HepG2 (cell line): ENCODE measurements at regions of chrX and their contacts with region 1.

Region 1: GRCh38 chrX:30652527-30653414 is 452 bp upstream of the GK start:
- DNase-seq: peak; percentile 85
- ATAC-seq: peak; percentile 89
- H3K4me3 ChIP-seq: peak overlapping the region; percentile 46 to 72 (median 52)
- H3K27ac ChIP-seq: peak overlapping the region; percentile 96
- H3K4me1 ChIP-seq: peaks cover 66% of the 10 kb centered on the region
- H3K27me3 ChIP-seq: no peaks in the 10 kb centered on the region; a peak in 1 of 5 replicates
- CTCF ChIP-seq: no peak
- EP300 ChIP-seq: no peak
- POLR2A ChIP-seq: peak in 1 of 2 experiments; percentile 84; a peak in 3 of 4 replicates
- RAD21 ChIP-seq: peak; percentile 51

Region 2: DNA sequence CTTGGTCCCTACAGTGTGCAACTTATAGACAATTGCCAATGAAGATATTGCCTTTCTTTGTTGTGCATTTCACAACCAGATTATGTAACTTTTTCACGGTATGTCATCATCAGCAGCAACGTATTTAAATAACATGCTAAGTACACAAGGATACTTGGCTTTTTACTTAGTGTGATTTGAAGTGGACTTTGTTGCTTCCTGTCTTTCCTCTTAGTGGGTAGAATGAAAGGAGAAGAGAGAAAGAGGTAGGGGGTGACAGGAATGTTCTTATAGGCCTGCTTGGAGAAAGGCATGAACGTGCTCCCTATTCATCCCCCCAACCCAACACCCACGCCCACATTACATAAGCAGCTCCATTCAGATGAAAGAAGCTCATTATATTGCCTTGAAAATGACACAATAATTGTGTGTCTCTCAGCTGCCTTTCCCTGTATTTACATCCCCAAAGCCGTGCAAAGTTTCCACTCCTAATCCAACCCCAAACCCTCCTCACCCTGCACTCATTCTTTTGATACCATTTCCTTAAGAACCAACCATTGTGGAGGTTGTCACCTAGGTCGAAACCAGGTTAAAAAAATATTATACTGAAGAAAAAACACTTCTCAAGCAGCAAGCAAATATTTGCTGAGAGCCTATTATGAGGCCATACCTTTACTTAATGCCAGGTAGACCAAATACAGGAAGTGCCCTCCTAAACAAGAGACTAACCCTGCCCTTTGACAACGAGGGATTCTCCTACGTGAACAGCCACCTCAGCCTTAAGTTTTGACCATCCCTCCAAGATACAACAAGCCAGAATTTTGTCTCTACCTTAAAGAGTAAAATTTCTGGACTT is 24.7 kb before region 1 on chrX:
- CTCF ChIA-PET with region 1: no interaction called
- POLR2A ChIA-PET with region 1: interaction called, 15 read pairs
- in situ Hi-C with region 1: no loop called
- intact Hi-C with region 1: no loop called
- DNase-seq: peak; percentile 88
- ATAC-seq: peak; percentile 81
- H3K4me3 ChIP-seq: no peak overlapping the region; a peak in 1 of 6 replicates
- H3K27ac ChIP-seq: peak overlapping the region; percentile 94
- H3K4me1 ChIP-seq: peaks cover 43% of the 10 kb centered on the region
- H3K27me3 ChIP-seq: no peaks in the 10 kb centered on the region
- CTCF ChIP-seq: no peak
- EP300 ChIP-seq: peak; percentile 77 to 96
- POLR2A ChIP-seq: no peak; a peak in 1 of 4 replicates
- RAD21 ChIP-seq: no peak

Region 3: GRCh38 chrX:30680618-30681017 is 27.8 kb after region 1 on chrX:
- CTCF ChIA-PET with region 1: no interaction called
- POLR2A ChIA-PET with region 1: interaction called, 19 read pairs
- in situ Hi-C with region 1: no loop called
- intact Hi-C with region 1: no loop called
- DNase-seq: no peak
- ATAC-seq: no peak
- H3K4me3 ChIP-seq: no peak overlapping the region
- H3K27ac ChIP-seq: peak overlapping the region; percentile 81
- H3K4me1 ChIP-seq: peaks cover 77% of the 10 kb centered on the region
- H3K27me3 ChIP-seq: no peaks in the 10 kb centered on the region
- CTCF ChIP-seq: no peak
- EP300 ChIP-seq: no peak
- POLR2A ChIP-seq: no peak
- RAD21 ChIP-seq: no peak

Region 4: GRCh38 chrX:30889147-30890140 is 236.7 kb after region 1 on chrX and contains the start of gene TAB3:
- CTCF ChIA-PET with region 1: no interaction called
- POLR2A ChIA-PET with region 1: no interaction called
- in situ Hi-C with region 1: no loop called
- intact Hi-C with region 1: no loop called
- DNase-seq: peak; percentile 94
- ATAC-seq: peak; percentile 92
- H3K4me3 ChIP-seq: peak within 1 kb of the TSS; percentile 72 to 94 (median 84)
- H3K27ac ChIP-seq: peak within 1 kb of the TSS; percentile 76
- H3K4me1 ChIP-seq: peaks cover 34% of the 10 kb centered on the region
- H3K27me3 ChIP-seq: no peaks in the 10 kb centered on the region
- CTCF ChIP-seq: no peak
- EP300 ChIP-seq: no peak
- POLR2A ChIP-seq: peak; percentile 39 to 58; a peak in 3 of 4 replicates
- RAD21 ChIP-seq: no peak; the same call in 1 of the 2 replicates
- total RNA-seq, gene TAB3: 27.2 and 35.8 TPM in 2 replicates